ENCODE measurements at regions of chr4 and their contacts with region 1.

Region 1: GRCh38 chr4:32454482-32454881 is 1734.3 kb downstream of the PCDH7 start:
- DNase-seq: no peak
- H3K4me3 ChIP-seq: no peak overlapping the region
- H3K27ac ChIP-seq: no peak overlapping the region
- H3K4me1 ChIP-seq: no peaks in the 10 kb centered on the region
- CTCF ChIP-seq: no peak

Region 2: GRCh38 chr4:32440391-32440790 is 14.1 kb before region 1 on chr4:
- CTCF ChIA-PET with region 1: no interaction called
- POLR2A ChIA-PET with region 1: interaction called, 13 read pairs
- intact Hi-C with region 1: no loop called
- DNase-seq: peak; percentile 30
- H3K4me3 ChIP-seq: no peak overlapping the region
- H3K27ac ChIP-seq: no peak overlapping the region
- H3K4me1 ChIP-seq: peaks cover 34% of the 10 kb centered on the region
- CTCF ChIP-seq: no peak

Measured in OCI-LY7 (cell line).